ENCODE measurements at regions of chr7 and their contacts with region 1.

Region 1: DNA sequence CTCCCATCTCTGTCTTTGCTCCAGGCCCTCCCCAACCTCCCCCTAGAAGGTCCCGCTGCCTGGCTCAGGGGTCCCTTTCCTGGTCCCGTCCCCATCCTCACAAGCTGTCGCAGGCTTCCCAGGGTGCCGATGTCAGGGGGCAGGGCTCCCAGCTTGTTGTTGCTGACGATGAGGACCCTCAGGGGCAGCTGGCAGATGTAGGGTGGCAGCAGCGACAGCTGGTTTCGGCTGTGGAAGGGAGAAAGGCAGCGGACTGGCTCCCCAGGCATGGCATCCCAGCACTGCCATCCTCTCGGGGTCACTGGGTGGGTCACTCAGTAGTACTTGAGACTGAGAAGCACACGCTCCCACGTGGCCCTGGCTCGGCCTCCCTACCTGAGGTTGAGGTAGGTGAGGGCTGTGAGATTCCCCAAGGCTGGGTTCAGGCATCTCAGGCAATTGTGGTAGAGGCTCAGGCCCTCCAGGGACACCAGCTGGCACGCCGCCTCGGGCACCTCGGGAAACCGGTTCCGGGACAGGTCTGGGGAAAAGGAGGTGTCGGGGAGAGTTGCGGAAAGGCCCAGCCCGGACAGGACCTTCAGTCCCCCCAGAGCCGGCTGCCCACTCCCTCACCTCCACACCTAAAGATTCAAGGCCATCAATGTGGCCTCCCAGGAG is 3.9 kb downstream of the LRCH4 start:
- DNase-seq: no peak
- H3K4me3 ChIP-seq: no peak overlapping the region
- H3K27ac ChIP-seq: peak overlapping the region; percentile 96 to 99
- H3K4me1 ChIP-seq: peaks cover 31% of the 10 kb centered on the region
- H3K27me3 ChIP-seq: no peaks in the 10 kb centered on the region
- CTCF ChIP-seq: no peak
- POLR2A ChIP-seq: no peak

Region 2: GRCh38 chr7:100545360-100546128 is 36.5 kb before region 1 on chr7:
- intact Hi-C with region 1: loop called (anchors 1 kb)
- DNase-seq: peak; percentile 84
- H3K4me3 ChIP-seq: no peak overlapping the region
- H3K27ac ChIP-seq: peak overlapping the region; percentile 90 to 92
- H3K4me1 ChIP-seq: peaks cover 54% of the 10 kb centered on the region
- H3K27me3 ChIP-seq: no peaks in the 10 kb centered on the region
- CTCF ChIP-seq: no peak
- POLR2A ChIP-seq: no peak

Region 3: GRCh38 chr7:100736671-100737070 is 154.6 kb after region 1 on chr7:
- intact Hi-C with region 1: no loop called
- DNase-seq: no peak
- H3K4me3 ChIP-seq: no peak overlapping the region
- H3K27ac ChIP-seq: no peak overlapping the region
- H3K4me1 ChIP-seq: no peaks in the 10 kb centered on the region
- H3K27me3 ChIP-seq: no peaks in the 10 kb centered on the region
- CTCF ChIP-seq: no peak
- POLR2A ChIP-seq: no peak